ENCODE measurements at regions of chr2 and their contacts with region 1.

Region 1: DNA sequence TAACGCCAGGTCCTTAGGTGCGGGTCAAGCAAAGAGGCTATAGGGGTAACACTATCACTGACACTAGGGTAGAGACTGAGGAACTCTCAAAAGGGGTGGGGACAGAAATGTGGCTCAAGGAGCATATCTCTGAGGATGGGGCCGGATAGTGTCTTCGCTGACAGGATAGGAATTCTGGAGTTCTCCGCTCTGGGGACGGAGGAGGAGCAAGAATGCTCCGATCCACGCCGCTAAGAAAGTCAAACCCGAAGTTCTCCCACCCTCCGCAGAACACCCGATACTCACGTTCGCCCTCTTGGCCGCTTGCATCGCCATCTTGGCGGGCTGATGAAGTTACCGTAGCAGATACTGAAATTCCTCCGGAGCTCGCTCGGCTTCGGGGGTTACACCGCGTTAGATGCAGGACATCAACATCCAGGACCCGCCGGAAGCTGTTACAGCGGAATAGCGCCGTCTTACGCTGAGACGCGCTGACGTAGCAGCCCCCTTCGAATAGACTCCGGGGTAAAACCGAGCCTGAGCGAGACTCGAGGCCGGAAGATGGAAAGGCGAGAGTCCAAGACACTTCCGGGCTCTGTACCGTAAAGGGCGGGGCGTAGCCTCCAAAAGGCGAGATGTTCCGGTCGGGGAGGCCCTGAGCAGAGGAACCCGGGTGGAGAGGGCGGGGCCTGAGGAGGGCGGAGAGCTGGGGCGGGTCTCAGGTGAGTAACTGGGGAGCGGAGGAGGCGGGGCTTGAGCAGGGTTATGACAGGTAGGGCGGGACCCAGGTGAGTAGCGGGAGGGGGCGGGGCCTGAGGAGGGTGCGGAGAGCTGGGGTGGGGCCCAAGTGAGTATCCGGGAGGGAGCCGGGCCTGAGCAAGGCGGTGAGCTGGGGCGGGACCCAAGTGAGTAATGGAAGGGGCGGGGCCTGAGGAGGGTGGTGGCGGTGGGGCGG is at the start of gene SF3B6:
- DNase-seq: peak; percentile 92 to 99 (median 97)

Region 2: DNA sequence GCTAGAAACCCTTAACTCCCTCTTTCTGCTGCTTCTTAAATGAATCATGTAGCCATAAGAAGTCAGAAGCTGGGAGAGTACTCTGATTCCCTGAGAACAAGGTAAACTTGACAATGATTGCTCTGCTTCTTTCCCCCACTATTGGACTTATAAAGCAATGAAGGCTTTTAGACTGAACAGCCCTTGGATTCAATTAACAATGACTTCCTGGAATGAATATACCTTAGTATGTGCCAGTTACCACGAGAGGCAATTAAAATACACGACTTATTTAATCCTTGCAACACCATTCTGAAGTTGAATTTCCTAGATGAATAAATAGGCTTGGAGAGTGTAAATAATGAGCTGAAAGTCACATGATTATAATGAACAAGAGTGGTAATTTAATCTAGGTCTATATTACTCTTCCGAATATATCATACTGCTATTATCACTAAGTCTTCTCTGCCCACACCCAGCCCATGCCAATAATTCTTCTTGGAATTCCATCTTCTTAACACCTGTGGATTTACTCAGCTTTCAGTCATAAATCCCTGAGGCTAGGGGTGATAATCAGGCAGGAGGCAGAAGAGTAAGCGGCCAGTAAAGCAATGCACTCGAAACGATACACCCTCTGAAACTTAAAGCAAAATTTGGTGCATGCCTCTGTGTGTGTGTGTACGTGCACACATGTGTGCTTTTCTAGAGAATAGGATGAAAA is 319.4 kb before region 1 on chr2:
- intact Hi-C with region 1: no loop called
- DNase-seq: no peak

Region 3: GRCh38 chr2:24123195-24123921 is 47.2 kb after region 1 on chr2 and contains the starts of genes FAM228B and PFN4:
- intact Hi-C with region 1: loop called (anchors 10 kb)
- DNase-seq: peak; percentile 71 to 94 (median 89)

Region 4: DNA sequence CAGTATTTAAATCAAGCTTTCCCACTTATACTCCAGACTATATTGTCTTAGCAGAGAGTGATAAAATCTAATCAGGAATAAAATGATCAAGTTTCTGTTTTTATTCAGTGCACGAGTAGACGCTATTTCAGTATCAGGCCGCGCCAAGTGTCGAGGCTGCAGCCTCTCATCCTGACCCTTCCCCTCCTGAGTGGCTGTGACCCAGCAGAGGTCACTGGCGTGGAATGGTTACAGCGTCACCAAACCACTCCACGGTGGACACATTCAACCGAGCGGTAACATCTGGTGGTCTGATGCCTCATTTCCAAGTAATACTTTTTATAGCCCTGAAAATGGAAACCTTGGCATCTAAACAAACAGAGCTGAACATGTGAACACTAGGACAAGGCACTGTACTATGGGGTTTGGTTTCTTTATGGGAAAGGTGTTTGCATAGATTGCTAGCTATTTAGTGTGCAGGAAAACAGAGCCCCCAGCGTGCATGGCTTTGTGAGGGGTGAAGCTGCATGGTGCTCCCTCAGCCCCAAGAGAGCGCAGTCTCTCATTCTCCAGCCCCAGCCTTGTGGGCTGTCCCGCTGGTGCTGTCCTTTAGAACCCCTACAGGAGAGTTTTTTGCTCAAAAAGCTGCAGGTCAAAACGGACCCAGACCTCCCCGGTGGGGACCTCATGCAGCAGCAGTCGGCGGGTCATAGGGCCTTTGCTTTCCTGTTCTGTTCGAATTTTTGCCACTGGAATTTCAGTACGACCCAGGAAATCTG is 127.0 kb after region 1 on chr2:
- intact Hi-C with region 1: no loop called
- DNase-seq: no peak

Region 5: GRCh38 chr2:24214880-24215279 is 138.7 kb after region 1 on chr2:
- intact Hi-C with region 1: no loop called
- DNase-seq: no peak

Region 6: GRCh38 chr2:24238158-24238557 is 162.0 kb after region 1 on chr2:
- intact Hi-C with region 1: no loop called
- DNase-seq: no peak